Common myeloid progenitor, CD34-positive (primary cell): ENCODE measurements at regions of chr3 and their contacts with region 1.

Region 1: GRCh38 chr3:9302425-9303181 is 53.2 kb upstream of the SRGAP3 start:
- DNase-seq: peak; percentile 85 to 93 (median 92)
- H3K4me3 ChIP-seq: peak overlapping the region in 4 of 7 experiments; percentile 26 to 57 (median 39)
- H3K27ac ChIP-seq: no peak overlapping the region
- H3K4me1 ChIP-seq: peaks cover 0 to 4% (median 2%) of the 10 kb centered on the region in 4 experiments
- H3K27me3 ChIP-seq: peaks cover 0 to 7% (median 0%) of the 10 kb centered on the region in 5 experiments

Region 2: GRCh38 chr3:8970971-8971589 is 331.5 kb before region 1 on chr3:
- CTCF ChIA-PET with region 1: interaction called, 197 read pairs
- POLR2A ChIA-PET with region 1: no interaction called
- DNase-seq: peak; percentile 61 to 84 (median 76)
- H3K4me3 ChIP-seq: no peak overlapping the region
- H3K27ac ChIP-seq: no peak overlapping the region
- H3K4me1 ChIP-seq: no peaks in the 10 kb centered on the region
- H3K27me3 ChIP-seq: peaks cover 0 to 14% (median 3%) of the 10 kb centered on the region in 5 experiments

Region 3: GRCh38 chr3:9249273-9250192 is 53.1 kb before region 1 on chr3 and contains the start of gene SRGAP3:
- CTCF ChIA-PET with region 1: interaction called, 11 read pairs
- POLR2A ChIA-PET with region 1: no interaction called
- DNase-seq: peak; percentile 90 to 97 (median 96)
- H3K4me3 ChIP-seq: peak within 1 kb of the TSS; percentile 68 to 94 (median 76)
- H3K27ac ChIP-seq: no peak within 1 kb of the TSS
- H3K4me1 ChIP-seq: peaks cover 12 to 33% (median 27%) of the 10 kb centered on the region in 4 experiments
- H3K27me3 ChIP-seq: no peaks in the 10 kb centered on the region

Region 4: GRCh38 chr3:9291821-9292410 is 10.7 kb before region 1 on chr3:
- CTCF ChIA-PET with region 1: no interaction called
- POLR2A ChIA-PET with region 1: no interaction called
- DNase-seq: no peak
- H3K4me3 ChIP-seq: no peak overlapping the region
- H3K27ac ChIP-seq: no peak overlapping the region
- H3K4me1 ChIP-seq: no peaks in the 10 kb centered on the region
- H3K27me3 ChIP-seq: peaks cover 0 to 2% (median 0%) of the 10 kb centered on the region in 5 experiments

Region 5: DNA sequence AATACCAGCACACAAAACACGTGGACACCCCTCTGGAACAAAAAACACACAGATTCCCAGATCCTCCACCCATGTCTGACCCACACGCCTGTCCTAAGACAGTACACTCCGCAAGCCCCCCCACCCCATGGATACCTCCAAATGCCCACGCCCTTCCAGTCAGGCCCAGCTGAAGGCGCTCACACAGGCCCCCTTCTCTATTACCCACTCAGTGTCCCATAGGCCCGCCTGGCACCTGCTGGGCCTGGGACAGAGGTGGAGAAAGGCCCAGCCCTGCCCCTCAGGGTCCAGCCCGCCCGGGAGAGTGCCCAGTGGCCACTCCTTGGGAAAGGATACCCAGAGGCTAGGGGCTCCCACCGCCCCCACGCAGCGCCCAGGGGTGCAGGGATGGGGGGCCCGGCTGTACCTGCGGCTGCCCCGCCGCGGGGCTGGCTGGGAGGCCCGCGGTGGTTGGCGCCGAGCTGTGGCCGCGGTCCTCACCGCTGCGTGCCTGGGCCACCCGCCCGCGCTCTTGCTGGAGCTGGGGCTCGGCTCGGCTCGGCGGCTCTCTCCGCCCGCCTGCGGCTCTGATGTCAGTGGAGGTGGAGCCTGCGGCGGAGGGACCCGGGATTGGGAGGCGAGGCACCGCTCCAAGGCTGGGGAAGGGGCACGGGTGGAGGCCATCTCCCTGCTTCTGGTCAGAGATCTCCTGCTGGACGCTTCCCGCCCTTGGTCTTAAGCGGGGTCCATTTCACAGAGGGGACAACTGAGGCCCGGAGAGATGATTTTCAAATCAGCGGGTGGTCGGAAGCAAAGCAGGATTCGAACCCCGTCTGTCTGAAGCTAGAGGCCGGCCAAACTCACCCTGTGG is 467.0 kb after region 1 on chr3 and contains the start of gene CAMK1:
- CTCF ChIA-PET with region 1: no interaction called
- POLR2A ChIA-PET with region 1: no interaction called
- DNase-seq: peak in 2 of 3 donors; percentile 67 to 74
- H3K4me3 ChIP-seq: peak within 1 kb of the TSS in 3 of 7 experiments; percentile 41 to 55 (median 48)
- H3K27ac ChIP-seq: no peak within 1 kb of the TSS
- H3K4me1 ChIP-seq: peaks cover 0 to 19% (median 12%) of the 10 kb centered on the region in 4 experiments
- H3K27me3 ChIP-seq: peaks cover 0 to 25% (median 3%) of the 10 kb centered on the region in 5 experiments